Activated naive CD4-positive, alpha-beta T cell treated with anti-CD3 and anti-CD28 coated beads for 36 hours (primary cell): ENCODE measurements at regions of chr1 and their contacts with region 1.

Region 1: DNA sequence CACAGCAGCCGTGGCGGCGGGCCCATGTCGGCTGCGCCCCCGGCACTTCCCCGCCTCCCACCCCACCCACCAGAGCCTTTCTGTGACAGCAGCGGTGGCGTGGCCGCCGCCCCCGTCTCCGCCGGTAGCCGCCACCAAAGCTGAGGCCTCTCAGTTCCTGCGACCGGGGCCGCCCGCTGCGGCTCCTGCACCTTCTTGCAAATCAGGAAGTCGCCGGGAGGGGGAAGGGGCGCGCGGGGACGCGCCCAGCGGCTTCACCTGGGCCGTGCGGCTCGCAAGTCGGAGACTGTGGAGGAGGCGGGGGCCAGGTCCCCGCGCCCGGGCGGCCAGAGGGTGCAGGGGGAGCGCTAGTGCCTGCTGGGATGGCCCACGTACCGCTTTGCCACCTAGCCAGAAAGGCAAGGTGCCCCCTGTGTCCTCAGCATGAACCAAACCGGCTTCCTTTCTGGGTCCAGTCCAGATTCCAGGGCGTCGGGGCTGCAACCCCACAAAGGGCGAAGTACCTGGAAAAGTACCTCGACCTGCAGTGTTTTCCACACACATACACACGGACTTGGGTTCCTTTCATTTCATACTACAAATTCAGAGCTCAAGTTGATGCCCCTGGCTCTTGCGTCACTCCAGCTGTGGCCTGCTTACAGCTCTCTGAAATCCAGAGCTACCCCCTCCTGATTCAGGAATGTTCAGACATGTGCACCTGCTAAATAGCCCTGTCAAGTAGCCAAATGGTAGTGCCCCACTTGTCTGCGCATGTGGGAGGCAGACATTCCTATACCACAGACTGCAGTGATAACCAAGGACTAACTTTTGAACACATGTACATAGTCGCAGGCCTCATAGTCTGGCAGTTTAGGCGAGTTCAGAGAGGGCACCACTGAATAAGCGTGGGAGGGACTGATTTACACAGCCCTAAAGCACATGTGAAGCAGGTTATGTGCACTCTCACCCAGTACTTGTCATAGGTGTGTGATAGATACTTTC is at the start of gene DENND1B:
- DNase-seq: peak; percentile 84
- H3K4me3 Mint-ChIP-seq: peak within 1 kb of the TSS; percentile 74
- H3K27ac Mint-ChIP-seq: peak within 1 kb of the TSS; percentile 99
- H3K4me1 Mint-ChIP-seq: peaks cover 64% of the 10 kb centered on the region
- H3K27me3 Mint-ChIP-seq: no peaks in the 10 kb centered on the region
- total RNA-seq, gene DENND1B: 8.9 to 9.7 TPM

Region 2: DNA sequence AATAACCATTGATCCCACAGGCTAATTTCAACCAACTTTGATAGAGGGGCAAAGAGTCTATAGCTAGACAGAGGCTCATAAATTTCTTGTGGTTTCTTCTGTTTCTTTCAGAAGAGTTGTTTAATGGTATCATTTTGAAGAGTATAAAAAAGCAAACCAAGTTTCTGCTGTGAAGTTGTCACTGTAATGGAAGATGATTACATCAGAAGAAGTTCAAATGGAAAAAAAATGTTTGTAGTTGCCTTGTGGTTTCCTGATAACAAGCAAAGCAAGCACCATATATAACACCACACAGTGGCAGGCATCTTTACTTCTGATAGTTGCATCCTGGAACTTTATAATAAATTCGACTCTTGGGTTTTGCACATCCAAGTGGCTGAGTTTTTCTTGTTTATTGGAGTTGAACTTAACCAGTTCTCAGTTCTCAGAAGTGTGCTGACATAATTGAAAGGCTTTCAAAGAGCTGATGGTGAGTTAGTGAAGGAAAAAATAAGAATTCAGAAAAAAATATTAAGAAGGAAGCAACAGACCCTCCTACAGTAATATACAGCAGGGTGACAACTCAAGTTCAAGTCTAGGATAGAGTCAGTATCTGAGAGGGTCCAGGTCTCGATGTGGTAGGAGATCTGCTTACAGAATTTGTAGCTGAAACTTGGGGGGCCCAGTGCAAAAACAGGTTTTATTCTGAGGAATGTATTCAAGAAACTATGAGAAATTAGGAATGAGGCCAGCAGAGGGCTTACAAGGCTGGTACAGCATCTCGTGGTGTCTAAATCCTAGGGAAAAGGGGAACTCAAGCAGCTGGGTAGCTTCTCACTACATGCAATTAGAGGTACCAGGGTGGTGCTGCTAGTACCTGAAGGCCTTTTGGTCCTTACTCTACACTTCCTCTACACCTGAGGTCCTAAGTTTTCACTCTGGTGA is 384.0 kb before region 1 on chr1:
- CTCF ChIA-PET with region 1: interaction called, 3 read pairs
- intact Hi-C with region 1: loop called (anchors 5 kb)
- DNase-seq: no peak
- H3K4me3 Mint-ChIP-seq: no peak overlapping the region
- H3K27ac Mint-ChIP-seq: peak overlapping the region; percentile 50
- H3K4me1 Mint-ChIP-seq: peaks cover 33% of the 10 kb centered on the region
- H3K27me3 Mint-ChIP-seq: no peaks in the 10 kb centered on the region

Region 3: GRCh38 chr1:197902454-197903195 is 127.1 kb after region 1 on chr1 and contains the start of gene C1orf53:
- CTCF ChIA-PET with region 1: no interaction called
- intact Hi-C with region 1: loop called (anchors 1 kb)
- DNase-seq: peak; percentile 77
- H3K4me3 Mint-ChIP-seq: peak within 1 kb of the TSS; percentile 84
- H3K27ac Mint-ChIP-seq: peak within 1 kb of the TSS; percentile 55
- H3K4me1 Mint-ChIP-seq: peaks cover 10% of the 10 kb centered on the region
- H3K27me3 Mint-ChIP-seq: peaks cover 45% of the 10 kb centered on the region
- total RNA-seq, gene C1orf53: 0.52 TPM in 1 of 2 experiments, not detected in the other

Region 4: GRCh38 chr1:198187973-198188588 is 412.5 kb after region 1 on chr1:
- CTCF ChIA-PET with region 1: no interaction called
- intact Hi-C with region 1: no loop called
- DNase-seq: no peak
- H3K4me3 Mint-ChIP-seq: peak overlapping the region; percentile 16
- H3K27ac Mint-ChIP-seq: peak overlapping the region; percentile 20
- H3K4me1 Mint-ChIP-seq: peaks cover 72% of the 10 kb centered on the region
- H3K27me3 Mint-ChIP-seq: no peaks in the 10 kb centered on the region

Region 5: GRCh38 chr1:198253668-198254067 is 478.1 kb after region 1 on chr1:
- CTCF ChIA-PET with region 1: no interaction called
- intact Hi-C with region 1: loop called (anchors 1 kb)
- DNase-seq: no peak
- H3K4me3 Mint-ChIP-seq: no peak overlapping the region
- H3K27ac Mint-ChIP-seq: no peak overlapping the region
- H3K4me1 Mint-ChIP-seq: peaks cover 46% of the 10 kb centered on the region
- H3K27me3 Mint-ChIP-seq: no peaks in the 10 kb centered on the region

Region 6: DNA sequence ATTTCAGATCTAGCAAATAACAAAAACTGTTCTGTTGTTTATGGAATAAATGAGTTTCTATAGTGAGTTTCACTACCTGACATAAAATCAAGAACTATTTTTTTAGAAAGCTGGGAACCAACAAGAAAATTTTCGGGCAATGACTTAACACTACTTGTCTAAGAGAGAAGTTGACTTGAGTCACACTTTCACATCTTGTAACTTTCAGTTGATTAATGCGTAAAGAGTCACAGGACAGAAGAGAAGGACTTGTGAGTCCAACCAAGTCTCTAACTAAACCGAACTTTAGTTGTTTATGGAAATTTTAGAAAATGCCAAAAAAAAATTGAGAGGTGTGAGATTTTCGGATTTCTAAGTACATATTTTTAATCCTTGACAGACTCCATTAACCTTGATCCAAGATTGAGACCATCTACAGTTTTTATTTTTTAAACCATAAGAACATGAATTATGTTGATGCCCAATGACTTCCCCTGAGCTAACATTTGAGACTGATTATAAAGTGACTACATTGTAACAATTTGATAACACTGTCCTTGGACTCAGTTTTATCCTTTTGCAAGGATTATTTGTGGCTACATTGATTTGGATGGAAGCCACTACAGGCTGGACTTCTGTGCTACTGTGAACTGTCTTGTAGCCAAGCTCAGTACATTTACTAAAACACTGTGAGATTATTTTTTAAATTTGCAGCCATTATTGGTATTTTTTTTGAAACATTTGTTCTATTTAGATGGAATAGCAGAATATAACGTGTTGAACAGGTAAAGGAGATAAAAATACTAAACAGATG is 1147.3 kb after region 1 on chr1:
- CTCF ChIA-PET with region 1: no interaction called
- intact Hi-C with region 1: loop called (anchors 2 kb)
- DNase-seq: no peak
- H3K4me3 Mint-ChIP-seq: no peak overlapping the region
- H3K27ac Mint-ChIP-seq: peak overlapping the region; percentile 79
- H3K4me1 Mint-ChIP-seq: peaks cover 71% of the 10 kb centered on the region
- H3K27me3 Mint-ChIP-seq: no peaks in the 10 kb centered on the region

Region 7: DNA sequence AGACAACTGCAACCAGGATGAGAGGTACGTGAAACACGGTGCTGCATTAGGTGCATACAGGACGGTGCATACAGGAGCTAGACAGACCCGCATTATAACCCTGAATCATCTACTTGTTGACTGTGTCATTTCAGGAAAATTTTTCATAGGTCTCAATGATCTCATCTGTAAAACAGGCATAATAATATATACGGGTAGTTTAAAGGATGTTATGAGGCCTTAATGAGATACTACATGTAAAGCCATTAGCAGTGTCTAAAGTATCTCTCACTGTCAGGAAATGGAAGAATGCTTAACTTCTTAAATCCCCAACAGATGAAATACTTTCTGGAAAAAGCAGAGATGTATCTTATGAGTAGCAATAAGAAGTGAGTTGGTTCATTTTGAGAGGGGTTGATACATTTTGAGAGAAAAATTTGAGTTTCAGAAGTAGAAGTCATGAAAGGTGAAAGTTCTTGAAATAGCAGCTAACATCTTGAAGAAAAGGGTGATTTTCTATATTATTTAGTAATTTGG is 1532.8 kb after region 1 on chr1:
- CTCF ChIA-PET with region 1: no interaction called
- intact Hi-C with region 1: loop called (anchors 5 kb)
- DNase-seq: no peak
- H3K4me3 Mint-ChIP-seq: no peak overlapping the region
- H3K27ac Mint-ChIP-seq: peak overlapping the region; percentile 51
- H3K4me1 Mint-ChIP-seq: peaks cover 31% of the 10 kb centered on the region
- H3K27me3 Mint-ChIP-seq: peaks cover 25% of the 10 kb centered on the region